Right ventricle myocardium superior (tissue), 1 donor: ENCODE measurements at regions of chr11 and their contacts with region 1.

Region 1: DNA sequence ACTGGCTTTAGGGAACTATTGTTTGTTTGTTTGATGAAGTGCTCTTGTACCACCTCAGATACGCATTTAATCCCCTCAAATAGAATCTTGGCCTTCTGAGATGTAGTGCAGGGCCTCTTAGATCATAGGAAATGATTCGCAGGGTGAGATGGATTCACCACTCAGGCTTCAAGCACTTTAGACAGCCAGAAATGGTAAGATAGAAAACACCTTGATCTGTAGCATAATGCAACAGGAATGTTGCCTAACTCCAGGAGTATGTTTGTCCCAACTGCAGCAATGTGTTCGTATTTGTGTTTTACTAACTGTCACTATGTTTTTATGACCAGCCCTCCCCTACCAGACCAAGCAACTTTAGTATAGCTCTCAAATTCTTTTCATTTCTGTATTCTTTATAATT is 761.1 kb downstream of the NELL1 start:
- DNase-seq: no peak
- ATAC-seq: no peak

Region 2: GRCh38 chr11:21343204-21343603 is 87.3 kb before region 1 on chr11:
- intact Hi-C with region 1: no loop called
- DNase-seq: no peak
- ATAC-seq: no peak

Region 3: GRCh38 chr11:21385669-21386068 is 44.9 kb before region 1 on chr11:
- intact Hi-C with region 1: loop called (anchors 10 kb)
- DNase-seq: no peak
- ATAC-seq: no peak